ENCODE measurements at regions of chr3 and their contacts with region 1.

Region 1: DNA sequence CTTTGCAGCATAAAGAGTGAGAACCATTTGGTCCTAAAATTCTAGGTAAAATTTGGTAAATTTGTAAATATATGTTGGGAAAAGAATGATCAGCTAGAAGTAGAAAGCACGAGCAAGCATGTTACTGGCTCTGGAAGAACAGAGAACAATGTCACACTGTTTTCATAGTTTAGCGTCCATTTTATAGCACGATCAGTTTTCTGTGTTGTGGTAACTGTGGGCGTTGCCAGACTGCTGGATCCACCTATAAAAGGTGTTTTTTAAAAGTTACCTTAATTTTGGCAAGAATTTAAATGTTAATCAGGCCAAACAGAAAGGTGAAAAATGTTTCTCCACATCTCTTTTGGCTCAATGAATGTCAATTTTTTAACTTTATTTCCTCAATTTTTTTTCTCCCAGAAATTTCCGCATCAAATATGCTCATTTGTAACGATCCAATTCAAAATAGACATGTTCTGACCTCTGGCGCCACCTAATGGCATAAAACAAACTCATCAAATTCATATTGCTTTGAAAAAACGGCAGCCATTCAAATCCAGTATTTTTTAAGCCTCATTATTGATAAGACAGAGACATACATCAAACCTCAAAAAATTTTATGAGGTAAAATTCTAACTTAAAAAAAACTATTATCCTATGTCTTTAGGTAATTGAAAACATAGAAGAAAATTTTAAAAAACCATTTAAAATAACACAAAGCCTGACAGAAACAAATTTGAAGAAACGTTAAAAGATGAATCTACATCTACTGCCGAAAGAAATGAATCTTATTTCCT is 5.5 kb upstream of the GP5 start:
- DNase-seq: peak; percentile 52
- ATAC-seq: no peak
- H3K4me3 ChIP-seq: no peak overlapping the region
- H3K27ac ChIP-seq: no peak overlapping the region
- H3K4me1 ChIP-seq: peaks cover 16% of the 10 kb centered on the region; the same call in 1 of the 2 replicates
- H3K27me3 ChIP-seq: no peaks in the 10 kb centered on the region
- CTCF ChIP-seq: peak; percentile 65
- EP300 ChIP-seq: no peak
- POLR2A ChIP-seq: no peak
- RAD21 ChIP-seq: peak; percentile 46; the same call in 1 of the 2 replicates

Region 2: DNA sequence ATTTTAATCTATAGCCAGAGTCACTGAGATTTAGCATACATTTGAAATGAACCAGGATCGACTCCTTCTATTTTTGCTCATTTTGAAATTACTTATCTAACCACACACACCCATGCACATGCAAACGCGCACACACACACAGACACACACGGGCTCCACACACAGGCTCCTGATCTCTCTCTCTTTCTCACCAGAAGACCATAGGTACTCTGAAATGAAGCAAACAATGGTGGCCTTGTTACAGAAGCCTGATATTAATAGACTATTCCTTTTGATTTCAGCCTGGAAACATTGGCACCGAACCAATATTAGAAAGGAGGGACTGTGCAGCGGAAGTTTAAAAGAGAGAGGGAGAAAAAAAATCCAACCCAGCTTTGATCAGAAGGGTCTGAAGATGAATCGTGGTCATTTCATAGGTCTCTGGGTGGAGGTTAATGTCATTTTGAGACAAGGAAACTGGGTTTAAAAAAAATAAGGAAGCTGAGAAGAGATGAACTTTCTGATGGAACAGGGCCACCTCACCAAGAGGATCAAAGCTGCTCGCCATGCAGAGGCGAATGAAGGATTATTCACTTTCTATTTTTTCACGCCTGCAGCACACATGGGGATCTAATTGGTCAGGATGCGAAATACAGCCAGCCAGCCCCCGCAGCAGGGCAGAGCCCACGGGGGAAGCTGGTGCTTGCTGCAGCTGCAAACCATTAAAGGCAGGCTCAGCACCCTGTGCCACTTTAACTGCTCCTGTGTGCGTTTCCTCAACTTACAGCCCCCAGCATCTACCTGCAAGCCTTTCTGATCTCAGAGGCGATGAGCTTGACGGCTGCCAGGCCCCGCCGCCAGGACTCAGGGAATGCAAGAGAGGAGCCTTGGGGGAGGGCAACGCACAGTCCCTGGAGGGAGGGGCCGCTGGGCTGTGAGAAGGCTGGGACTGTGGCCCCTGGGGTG is 179.8 kb before region 1 on chr3:
- CTCF ChIA-PET with region 1: no interaction called
- POLR2A ChIA-PET with region 1: no interaction called
- in situ Hi-C with region 1: no loop called
- intact Hi-C with region 1: no loop called
- DNase-seq: no peak
- ATAC-seq: no peak
- H3K4me3 ChIP-seq: no peak overlapping the region
- H3K27ac ChIP-seq: no peak overlapping the region
- H3K4me1 ChIP-seq: no peaks in the 10 kb centered on the region
- H3K27me3 ChIP-seq: peaks cover 4 to 32% of the 10 kb centered on the region in 2 experiments; a peak in 3 of 5 replicates
- CTCF ChIP-seq: no peak
- EP300 ChIP-seq: no peak
- POLR2A ChIP-seq: no peak
- RAD21 ChIP-seq: no peak

Region 3: DNA sequence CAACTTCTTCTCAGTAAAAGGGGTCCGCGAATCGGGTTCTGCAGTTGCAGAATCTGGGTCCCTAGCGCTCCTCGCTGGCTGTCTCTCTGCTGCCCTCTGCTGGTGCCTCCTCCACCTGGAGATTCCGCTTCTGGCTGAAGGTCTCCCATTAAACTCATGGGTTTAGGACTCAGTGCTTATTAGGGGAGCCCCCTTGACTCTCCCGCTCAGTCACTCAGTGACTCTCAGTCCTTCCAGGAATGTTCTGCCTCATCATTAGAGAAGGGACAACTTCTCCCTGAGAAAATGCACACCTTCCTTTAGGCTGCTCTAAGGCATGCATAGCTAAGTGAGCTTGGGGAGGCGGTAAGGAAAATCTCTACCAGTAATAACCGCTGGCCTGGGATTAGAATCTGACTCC is 60.5 kb before region 1 on chr3:
- CTCF ChIA-PET with region 1: interaction called, 6 read pairs
- POLR2A ChIA-PET with region 1: no interaction called
- in situ Hi-C with region 1: no loop called
- intact Hi-C with region 1: loop called (anchors 1 kb)
- DNase-seq: peak; percentile 30
- ATAC-seq: peak; percentile 78
- H3K4me3 ChIP-seq: no peak overlapping the region
- H3K27ac ChIP-seq: no peak overlapping the region
- H3K4me1 ChIP-seq: 0 out of 2 replicates have a peak, but pooled peaks cover 5% of the 10 kb centered on the region
- H3K27me3 ChIP-seq: no peaks in the 10 kb centered on the region
- CTCF ChIP-seq: peak; percentile 81
- EP300 ChIP-seq: no peak
- POLR2A ChIP-seq: no peak
- RAD21 ChIP-seq: peak; percentile 54; the same call in 1 of the 2 replicates

Region 4: DNA sequence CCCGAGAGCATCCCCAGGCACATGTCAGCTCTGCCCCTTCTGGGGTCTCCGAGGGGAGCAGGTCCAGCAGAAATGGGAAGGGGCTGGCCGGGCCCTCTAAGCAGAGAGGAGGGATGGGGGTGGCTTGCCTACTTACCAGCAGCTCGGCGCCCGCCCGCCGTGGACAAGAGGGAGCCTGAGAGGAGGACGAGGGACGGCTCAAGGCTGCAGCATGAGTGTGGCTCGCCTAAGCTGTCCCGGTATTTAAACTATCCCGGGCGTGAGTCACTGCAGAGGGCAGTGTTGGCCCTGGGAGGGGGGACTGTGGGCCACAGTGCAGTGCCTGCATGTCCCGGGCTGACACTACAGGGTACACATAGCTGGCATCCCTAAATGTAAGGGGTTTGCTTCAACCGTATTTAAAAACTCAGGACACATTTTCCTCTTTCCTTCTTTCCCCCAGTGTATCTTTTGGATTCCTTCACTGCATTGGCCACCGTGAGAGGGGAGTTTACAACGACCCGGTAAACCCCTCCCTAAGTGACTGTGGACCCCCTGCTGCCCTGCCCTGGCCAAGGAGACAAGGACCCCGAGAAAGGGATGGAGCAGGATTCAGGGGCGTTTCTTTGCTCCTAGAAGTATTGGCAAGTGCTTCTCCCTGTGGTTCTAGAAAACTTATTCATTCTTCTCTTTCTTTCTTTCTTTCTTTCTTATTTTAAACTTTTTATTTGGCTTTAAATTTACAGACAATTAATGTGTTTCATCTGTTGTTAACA is 34.9 kb before region 1 on chr3 and contains the start of gene LRRC15:
- CTCF ChIA-PET with region 1: no interaction called
- POLR2A ChIA-PET with region 1: no interaction called
- in situ Hi-C with region 1: no loop called
- intact Hi-C with region 1: loop called (anchors 2 kb)
- DNase-seq: peak; percentile 38
- ATAC-seq: peak; percentile 93
- H3K4me3 ChIP-seq: no peak within 1 kb of the TSS
- H3K27ac ChIP-seq: no peak within 1 kb of the TSS
- H3K4me1 ChIP-seq: peaks cover 14% of the 10 kb centered on the region
- H3K27me3 ChIP-seq: peaks cover 13 to 74% of the 10 kb centered on the region in 2 experiments; a peak in 4 of 5 replicates
- CTCF ChIP-seq: peak; percentile 70
- EP300 ChIP-seq: no peak
- POLR2A ChIP-seq: no peak
- RAD21 ChIP-seq: no peak
- total RNA-seq, gene LRRC15: not detected in 2 replicates